A549 (cell line): ENCODE measurements at regions of chr3 and their contacts with region 1.

Region 1: DNA sequence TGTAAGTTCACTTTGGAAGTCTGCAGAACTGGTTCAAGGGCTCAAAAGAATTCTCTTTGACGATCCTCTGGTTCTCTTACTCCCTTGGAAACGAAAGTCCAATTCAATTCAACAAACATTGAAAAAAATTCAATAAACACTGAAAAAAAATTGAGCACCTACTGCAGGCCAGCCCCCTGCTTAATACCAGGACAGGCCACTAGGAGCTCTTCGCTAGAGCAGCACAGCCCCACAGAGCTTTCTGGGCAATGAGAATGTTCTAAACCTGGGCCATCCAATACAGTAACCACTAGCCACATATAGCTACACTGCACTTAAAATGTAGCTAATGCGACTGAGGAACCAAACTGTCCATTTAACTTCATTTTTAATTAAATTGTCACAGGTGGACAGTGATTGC is 50.4 kb upstream of the DCLK3 start:
- DNase-seq: no peak
- ATAC-seq: peak; percentile 71 to 86; a peak in 4 of 6 replicates
- H3K4me3 ChIP-seq: no peak overlapping the region
- H3K27ac ChIP-seq: no peak overlapping the region
- H3K4me1 ChIP-seq: no peaks in the 10 kb centered on the region
- CTCF ChIP-seq: no peak
- EP300 ChIP-seq: no peak
- POLR2A ChIP-seq: no peak
- RAD21 ChIP-seq: no peak

Region 2: GRCh38 chr3:36416599-36416998 is 398.2 kb before region 1 on chr3:
- CTCF ChIA-PET with region 1: no interaction called
- POLR2A ChIA-PET with region 1: no interaction called
- DNase-seq: no peak
- ATAC-seq: no peak
- H3K4me3 ChIP-seq: no peak overlapping the region
- H3K27ac ChIP-seq: no peak overlapping the region
- H3K4me1 ChIP-seq: no peaks in the 10 kb centered on the region
- CTCF ChIP-seq: no peak
- EP300 ChIP-seq: no peak
- POLR2A ChIP-seq: no peak
- RAD21 ChIP-seq: no peak

Region 3: DNA sequence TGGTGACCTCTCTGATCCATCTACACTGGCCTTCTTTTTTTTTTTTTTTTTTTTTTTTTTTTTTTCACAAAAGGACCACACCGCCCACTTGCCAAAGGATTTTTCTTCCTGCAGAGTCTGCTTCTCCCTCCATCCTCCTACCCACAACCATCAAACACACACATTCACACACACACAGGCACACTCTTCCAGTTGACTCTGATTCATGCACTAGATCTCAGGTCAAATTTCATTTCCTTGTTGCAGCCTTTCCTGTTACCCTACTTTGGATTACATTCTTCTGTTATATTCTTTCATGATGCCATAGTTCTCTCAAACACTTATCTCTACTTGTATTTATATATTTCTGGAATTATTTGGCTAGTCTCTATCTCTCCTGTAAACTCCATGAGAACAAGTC is 300.6 kb before region 1 on chr3:
- CTCF ChIA-PET with region 1: no interaction called
- POLR2A ChIA-PET with region 1: no interaction called
- DNase-seq: no peak
- ATAC-seq: no peak
- H3K4me3 ChIP-seq: no peak overlapping the region
- H3K27ac ChIP-seq: no peak overlapping the region
- H3K4me1 ChIP-seq: no peaks in the 10 kb centered on the region
- CTCF ChIP-seq: no peak
- EP300 ChIP-seq: no peak
- POLR2A ChIP-seq: no peak
- RAD21 ChIP-seq: no peak

Region 4: DNA sequence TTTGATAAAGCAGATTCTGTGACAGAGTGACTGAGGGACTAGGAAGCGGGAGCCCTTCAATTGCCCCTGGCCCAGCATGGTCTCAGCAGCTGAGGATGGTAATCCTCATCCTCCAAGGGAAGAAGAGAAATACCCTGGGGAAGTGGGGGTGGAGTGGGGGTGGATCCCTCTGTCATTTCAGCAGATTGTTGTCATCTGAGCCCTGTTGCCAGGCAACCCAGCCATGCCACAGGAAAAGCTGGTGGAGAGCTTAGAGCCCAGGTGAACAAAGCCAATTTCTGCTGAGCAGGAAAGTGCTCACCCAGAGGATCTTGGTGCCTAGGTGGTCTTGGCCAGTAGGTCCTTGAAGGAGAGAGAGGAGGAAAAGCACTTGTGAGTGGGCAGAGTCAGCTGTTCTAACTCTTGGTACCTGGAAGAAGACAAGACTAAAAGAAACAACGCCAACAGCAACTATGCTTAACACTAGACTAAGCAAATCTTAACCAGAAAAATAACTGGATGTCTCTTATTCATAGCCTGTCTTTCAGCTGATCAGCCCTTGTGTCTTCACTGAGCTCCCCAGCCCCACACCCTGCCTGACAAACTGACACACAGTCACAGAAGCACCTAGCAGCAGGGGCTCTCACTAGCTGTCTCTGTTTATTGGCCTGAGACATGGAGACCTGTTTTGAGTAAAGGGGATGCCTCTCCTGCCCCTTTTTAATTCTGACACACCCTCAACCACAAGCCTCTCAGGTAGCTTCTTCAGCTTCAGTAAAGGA is 10.3 kb before region 1 on chr3:
- CTCF ChIA-PET with region 1: interaction called, 13 read pairs
- POLR2A ChIA-PET with region 1: no interaction called
- DNase-seq: no peak
- ATAC-seq: no peak
- H3K4me3 ChIP-seq: no peak overlapping the region
- H3K27ac ChIP-seq: no peak overlapping the region
- H3K4me1 ChIP-seq: no peaks in the 10 kb centered on the region
- CTCF ChIP-seq: no peak
- EP300 ChIP-seq: no peak
- POLR2A ChIP-seq: no peak
- RAD21 ChIP-seq: no peak

Region 5: GRCh38 chr3:36827133-36827532 is 12.4 kb after region 1 on chr3:
- CTCF ChIA-PET with region 1: interaction called, 12 read pairs
- POLR2A ChIA-PET with region 1: no interaction called
- DNase-seq: no peak
- ATAC-seq: no peak
- H3K4me3 ChIP-seq: no peak overlapping the region
- H3K27ac ChIP-seq: no peak overlapping the region
- H3K4me1 ChIP-seq: no peaks in the 10 kb centered on the region
- CTCF ChIP-seq: no peak
- EP300 ChIP-seq: no peak
- POLR2A ChIP-seq: no peak
- RAD21 ChIP-seq: no peak

Region 6: GRCh38 chr3:36944012-36944640 is 129.3 kb after region 1 on chr3:
- CTCF ChIA-PET with region 1: no interaction called
- POLR2A ChIA-PET with region 1: no interaction called
- DNase-seq: peak; percentile 44 to 49
- ATAC-seq: peak; percentile 84 to 87
- H3K4me3 ChIP-seq: peak overlapping the region; percentile 55
- H3K27ac ChIP-seq: peak overlapping the region; percentile 70 to 86
- H3K4me1 ChIP-seq: no peaks in the 10 kb centered on the region
- CTCF ChIP-seq: no peak
- EP300 ChIP-seq: no peak
- POLR2A ChIP-seq: peak; percentile 18
- RAD21 ChIP-seq: no peak